Transverse colon (tissue), 4 donors: ENCODE measurements at regions of chr3 and their contacts with region 1.

Region 1: DNA sequence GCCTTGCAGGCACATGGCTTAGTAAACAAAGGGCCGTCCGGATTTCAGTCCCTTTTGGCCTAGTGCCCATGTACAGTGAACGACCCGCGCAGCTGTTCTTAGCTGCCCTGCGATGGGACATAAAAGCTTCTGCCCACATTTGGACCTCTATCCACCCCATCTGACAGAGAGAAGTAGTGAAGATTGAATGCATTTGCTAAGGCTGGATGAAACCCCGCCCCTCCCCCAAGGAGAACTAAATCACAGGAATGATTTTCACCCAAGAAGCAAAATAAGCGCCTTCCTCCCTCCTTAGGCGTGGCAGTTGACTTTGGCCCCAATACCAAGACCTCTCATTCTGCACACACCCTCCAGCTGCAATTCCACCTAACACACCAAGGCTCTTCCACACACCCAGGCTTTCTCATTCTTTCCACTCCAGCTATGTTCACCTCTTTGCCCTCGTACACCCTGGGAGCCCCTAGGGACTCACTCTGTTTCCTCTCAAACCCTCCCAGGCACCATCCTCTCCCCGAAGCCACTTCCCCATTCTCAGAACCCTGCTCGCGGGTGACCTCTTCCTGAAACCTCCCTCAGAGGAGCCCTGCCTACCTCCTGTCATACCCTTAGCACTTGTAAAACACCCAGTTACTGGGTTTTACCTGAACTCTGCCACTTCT is 14.1 kb upstream of the HRH1 start:
- DNase-seq: peak; percentile 80
- H3K4me3 ChIP-seq: peak overlapping the region in 2 of 4 donors; percentile 11 to 34
- H3K27ac ChIP-seq: peak overlapping the region; percentile 70 to 84 (median 78)
- H3K4me1 ChIP-seq: peaks cover 4 to 22% (median 15%) of the 10 kb centered on the region in 4 donors
- H3K27me3 ChIP-seq: no peaks in the 10 kb centered on the region
- CTCF ChIP-seq: no peak
- EP300 ChIP-seq: no peak
- POLR2A ChIP-seq: peak; percentile 34

Region 2: DNA sequence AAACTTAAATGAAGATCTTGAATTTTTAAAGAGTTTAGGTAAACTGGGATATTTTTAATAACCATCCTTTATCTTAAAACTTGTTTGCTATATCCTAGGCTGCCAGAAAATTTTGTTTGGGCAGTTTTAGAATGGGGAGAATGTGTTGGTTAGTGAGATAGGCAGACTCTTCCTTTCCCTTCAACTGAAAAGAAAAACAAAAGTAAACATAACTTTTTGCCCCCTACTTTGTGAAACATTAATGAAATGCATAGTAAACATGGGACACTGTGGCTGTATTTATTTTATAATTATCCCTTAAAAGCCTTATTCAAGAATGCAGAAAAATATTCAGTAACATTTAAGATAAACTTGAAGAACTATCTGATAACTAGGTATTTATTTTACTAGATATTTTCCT is 1711.8 kb before region 1 on chr3:
- in situ Hi-C with region 1: no loop called
- intact Hi-C with region 1: loop called (anchors 5 kb)
- DNase-seq: no peak
- H3K4me3 ChIP-seq: no peak overlapping the region
- H3K27ac ChIP-seq: no peak overlapping the region
- H3K4me1 ChIP-seq: peaks cover 10 to 25% (median 12%) of the 10 kb centered on the region in 4 donors
- H3K27me3 ChIP-seq: no peaks in the 10 kb centered on the region
- CTCF ChIP-seq: no peak
- EP300 ChIP-seq: no peak
- POLR2A ChIP-seq: no peak

Region 3: DNA sequence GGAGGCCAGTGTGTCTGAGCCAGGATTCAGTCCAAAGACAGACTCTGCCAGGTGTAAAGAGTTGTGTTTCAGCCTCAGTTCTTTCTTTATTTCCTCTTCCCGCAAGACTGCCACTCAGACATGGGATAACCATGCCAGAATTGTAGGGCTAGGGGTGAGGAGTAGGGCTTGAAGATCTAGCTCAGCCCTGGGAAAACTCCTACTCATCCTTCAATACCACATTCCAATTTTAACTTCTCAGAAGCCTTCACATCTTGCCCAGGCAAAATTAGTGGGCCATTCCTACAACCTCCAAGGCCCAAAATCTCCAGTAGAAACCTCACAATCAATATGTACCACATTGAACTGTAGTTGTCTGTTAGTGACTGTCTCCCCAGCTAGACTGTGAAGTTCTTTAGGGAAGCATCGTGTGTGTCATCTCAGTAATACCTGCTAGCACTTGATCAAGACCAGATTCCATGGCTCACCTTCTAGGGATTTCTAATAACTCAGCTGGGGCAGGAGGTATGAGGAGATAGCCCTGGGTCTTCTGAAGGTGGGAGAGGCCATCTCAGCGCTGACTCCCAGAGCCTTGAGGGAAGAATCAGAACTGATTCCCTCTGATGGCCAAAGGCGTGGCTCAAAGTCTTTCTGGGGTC is 33.8 kb after region 1 on chr3:
- in situ Hi-C with region 1: no loop called
- intact Hi-C with region 1: no loop called
- DNase-seq: no peak
- H3K4me3 ChIP-seq: no peak overlapping the region
- H3K27ac ChIP-seq: no peak overlapping the region
- H3K4me1 ChIP-seq: peaks cover 0 to 4% (median 0%) of the 10 kb centered on the region in 4 donors
- H3K27me3 ChIP-seq: no peaks in the 10 kb centered on the region
- CTCF ChIP-seq: no peak
- EP300 ChIP-seq: no peak
- POLR2A ChIP-seq: no peak